T-cell (primary cell): ENCODE measurements at regions of chr5 and their contacts with region 1.

Region 1: GRCh38 chr5:159156426-159157238 is 52.7 kb downstream of the RNF145 start:
- DNase-seq: peak in 25 of 35 experiments; percentile 3 to 87 (median 24)
- ATAC-seq: peak; percentile 70 to 88 (median 80)
- H3K4me3 ChIP-seq: no peak overlapping the region
- H3K4me3 Mint-ChIP-seq: no peak overlapping the region
- H3K27ac ChIP-seq: peak overlapping the region; percentile 25
- H3K27ac Mint-ChIP-seq: peak overlapping the region; percentile 37 to 73
- H3K4me1 ChIP-seq: peaks cover 4 to 9% of the 10 kb centered on the region in 2 experiments
- H3K4me1 Mint-ChIP-seq: peaks cover 12 to 31% (median 25%) of the 10 kb centered on the region in 3 donors
- H3K27me3 ChIP-seq: no peaks in the 10 kb centered on the region
- H3K27me3 Mint-ChIP-seq: no peaks in the 10 kb centered on the region

Region 2: GRCh38 chr5:158634714-158635113 is 521.9 kb before region 1 on chr5:
- CTCF ChIA-PET with region 1: no interaction called
- POLR2A ChIA-PET with region 1: no interaction called
- DNase-seq: no peak
- ATAC-seq: no peak
- H3K4me3 ChIP-seq: no peak overlapping the region
- H3K4me3 Mint-ChIP-seq: no peak overlapping the region
- H3K27ac ChIP-seq: no peak overlapping the region
- H3K27ac Mint-ChIP-seq: no peak overlapping the region
- H3K4me1 ChIP-seq: peaks cover 0 to 2% of the 10 kb centered on the region in 2 experiments
- H3K4me1 Mint-ChIP-seq: no peaks in the 10 kb centered on the region
- H3K27me3 ChIP-seq: no peaks in the 10 kb centered on the region
- H3K27me3 Mint-ChIP-seq: peaks cover 1 to 10% of the 10 kb centered on the region in 2 donors

Region 3: DNA sequence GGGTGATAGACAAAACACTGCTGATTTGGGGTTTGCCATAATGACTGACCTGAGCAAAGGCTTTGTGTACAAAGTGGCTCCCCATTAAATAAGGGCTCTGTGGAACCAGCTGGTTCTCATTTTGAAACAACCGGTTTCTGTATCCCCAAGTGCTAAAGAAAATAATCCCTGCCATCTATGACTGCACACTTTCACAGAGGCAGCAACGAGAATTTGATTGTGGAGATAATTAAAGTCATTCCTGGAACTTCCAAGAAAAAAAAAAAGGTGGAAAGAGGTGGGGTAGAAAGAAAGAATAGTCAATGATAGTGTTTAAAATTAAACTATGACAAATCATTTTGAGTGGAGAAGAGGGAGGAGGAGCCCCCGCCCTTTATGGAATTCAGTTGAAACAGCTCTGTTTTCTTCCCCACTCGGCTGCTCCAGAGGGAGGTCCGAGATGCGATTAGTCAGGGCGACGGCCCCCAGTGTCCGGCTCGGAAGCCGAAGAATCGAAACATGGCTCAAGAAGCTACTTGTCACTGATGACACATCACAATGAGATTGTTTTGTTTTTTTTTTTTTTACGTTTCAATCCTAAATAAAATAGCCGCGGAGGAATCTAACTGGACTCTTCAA is 95.3 kb before region 1 on chr5:
- CTCF ChIA-PET with region 1: no interaction called
- POLR2A ChIA-PET with region 1: interaction called in 1 of 2 experiments, 11 read pairs
- DNase-seq: no peak
- ATAC-seq: no peak
- H3K4me3 ChIP-seq: no peak overlapping the region
- H3K4me3 Mint-ChIP-seq: no peak overlapping the region
- H3K27ac ChIP-seq: no peak overlapping the region
- H3K27ac Mint-ChIP-seq: no peak overlapping the region
- H3K4me1 ChIP-seq: peaks cover 0 to 8% of the 10 kb centered on the region in 2 experiments
- H3K4me1 Mint-ChIP-seq: peaks cover 0 to 4% (median 0%) of the 10 kb centered on the region in 3 donors
- H3K27me3 ChIP-seq: peaks cover 0 to 8% of the 10 kb centered on the region in 2 experiments
- H3K27me3 Mint-ChIP-seq: peaks cover 23 to 39% of the 10 kb centered on the region in 2 donors

Region 4: GRCh38 chr5:159209438-159210305 is 53.0 kb after region 1 on chr5 and contains the start of gene RNF145:
- CTCF ChIA-PET with region 1: interaction called, 11 to 16 read pairs
- POLR2A ChIA-PET with region 1: interaction called in 1 of 2 experiments, 3 read pairs
- DNase-seq: peak; percentile 87 to 96 (median 92)
- ATAC-seq: peak; percentile 78 to 80 (median 78)
- H3K4me3 ChIP-seq: peak within 1 kb of the TSS; percentile 90 to 99
- H3K4me3 Mint-ChIP-seq: peak within 1 kb of the TSS; percentile 89 to 99 (median 95)
- H3K27ac ChIP-seq: peak within 1 kb of the TSS; percentile 95
- H3K27ac Mint-ChIP-seq: peak within 1 kb of the TSS; percentile 95 to 99
- H3K4me1 ChIP-seq: peaks cover 9 to 34% of the 10 kb centered on the region in 2 experiments
- H3K4me1 Mint-ChIP-seq: peaks cover 42 to 62% (median 45%) of the 10 kb centered on the region in 3 donors
- H3K27me3 ChIP-seq: no peaks in the 10 kb centered on the region
- H3K27me3 Mint-ChIP-seq: no peaks in the 10 kb centered on the region
- total RNA-seq, gene RNF145: 54.0 to 62.8 (median 60.1) TPM

Region 5: GRCh38 chr5:159286420-159287035 is 129.9 kb after region 1 on chr5:
- CTCF ChIA-PET with region 1: interaction called, 4 to 17 read pairs
- POLR2A ChIA-PET with region 1: no interaction called
- DNase-seq: peak in 4 of 35 experiments; percentile 5 to 63 (median 8)
- ATAC-seq: peak in 2 of 4 experiments; percentile 43 to 55
- H3K4me3 ChIP-seq: no peak overlapping the region
- H3K4me3 Mint-ChIP-seq: no peak overlapping the region
- H3K27ac ChIP-seq: no peak overlapping the region
- H3K27ac Mint-ChIP-seq: no peak overlapping the region
- H3K4me1 ChIP-seq: no peaks in the 10 kb centered on the region
- H3K4me1 Mint-ChIP-seq: no peaks in the 10 kb centered on the region
- H3K27me3 ChIP-seq: no peaks in the 10 kb centered on the region
- H3K27me3 Mint-ChIP-seq: no peaks in the 10 kb centered on the region

Region 6: GRCh38 chr5:159987031-159987674 is 830.5 kb after region 1 on chr5:
- CTCF ChIA-PET with region 1: interaction called, 9 to 18 read pairs
- POLR2A ChIA-PET with region 1: no interaction called
- DNase-seq: peak; percentile 31 to 81 (median 61)
- ATAC-seq: peak; percentile 92 to 97 (median 95)
- H3K4me3 ChIP-seq: peak overlapping the region; percentile 38 to 64
- H3K4me3 Mint-ChIP-seq: peak overlapping the region; percentile 61 to 70 (median 69)
- H3K27ac ChIP-seq: no peak overlapping the region
- H3K27ac Mint-ChIP-seq: no peak overlapping the region
- H3K4me1 ChIP-seq: peaks cover 0 to 10% of the 10 kb centered on the region in 2 experiments
- H3K4me1 Mint-ChIP-seq: peaks cover 0 to 6% (median 4%) of the 10 kb centered on the region in 3 donors
- H3K27me3 ChIP-seq: peaks cover 0 to 22% of the 10 kb centered on the region in 2 experiments
- H3K27me3 Mint-ChIP-seq: peaks cover 21 to 35% of the 10 kb centered on the region in 2 donors